WTC11 (cell line): ENCODE measurements at regions of chr20 and their contacts with region 1.

Region 1: GRCh38 chr20:50980851-50981713 is 22.5 kb downstream of the MOCS3 start:
- DNase-seq: peak; percentile 74
- ATAC-seq: peak; percentile 75
- H3K4me3 Mint-ChIP-seq: 0 out of 2 replicates have a peak overlapping the region, but pooled peaks have one; percentile 29
- H3K27ac Mint-ChIP-seq: no peak overlapping the region
- H3K4me1 Mint-ChIP-seq: peaks cover 3% of the 10 kb centered on the region
- H3K27me3 Mint-ChIP-seq: peaks cover 5% of the 10 kb centered on the region; the same call in 1 of the 2 replicates
- CTCF ChIP-seq: peak; percentile 82

Region 2: DNA sequence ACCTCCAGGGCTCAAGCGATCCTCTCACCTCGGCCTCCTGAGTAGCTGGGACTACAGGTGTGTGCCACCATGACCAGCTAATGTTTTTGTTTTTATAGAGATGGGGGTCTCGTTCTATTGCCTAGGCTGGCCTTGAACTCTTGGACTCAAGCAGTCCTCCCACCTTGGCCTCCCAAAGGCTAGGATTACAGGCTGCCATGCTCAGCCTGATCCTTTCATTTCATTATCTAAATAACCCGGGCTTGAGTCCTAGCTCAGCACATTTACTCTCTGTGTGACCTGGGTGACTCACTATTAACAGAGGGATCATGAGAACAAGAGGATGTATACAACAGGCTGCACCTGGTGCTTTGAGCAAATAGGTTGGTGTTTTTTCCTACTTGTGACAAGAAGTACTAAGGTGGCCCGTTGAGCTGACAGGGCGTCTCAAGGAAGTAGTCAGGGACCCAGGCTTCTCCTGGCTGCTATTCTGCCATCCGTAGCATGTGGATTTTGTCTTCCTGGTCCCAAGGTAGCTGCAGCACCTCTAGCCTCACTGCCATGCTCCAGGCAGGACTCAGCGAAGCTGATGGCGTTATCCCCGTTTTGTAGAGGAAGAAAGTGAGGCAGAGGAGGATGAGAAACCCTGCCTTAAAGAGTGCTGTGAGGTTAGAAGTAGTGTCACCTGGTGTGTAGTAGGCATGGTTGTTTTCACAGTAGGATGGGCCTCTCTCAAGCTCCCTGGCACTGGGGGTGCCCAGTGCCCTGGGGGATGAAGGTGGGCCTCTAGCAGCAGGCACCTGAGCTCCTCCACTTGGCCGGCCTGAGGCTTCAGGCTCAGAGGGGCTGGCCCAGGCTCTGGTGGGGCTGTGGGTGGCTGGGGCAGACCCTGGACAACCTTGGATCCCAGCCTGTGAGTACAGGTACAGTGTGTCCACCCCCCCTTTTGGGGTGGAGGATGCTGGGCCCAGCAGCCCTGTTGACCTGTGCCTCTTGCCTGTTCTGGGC is 112.3 kb before region 1 on chr20:
- CTCF ChIA-PET with region 1: no interaction called
- POLR2A ChIA-PET with region 1: no interaction called
- DNase-seq: no peak
- ATAC-seq: no peak
- H3K4me3 Mint-ChIP-seq: no peak overlapping the region
- H3K27ac Mint-ChIP-seq: peak overlapping the region; percentile 96
- H3K4me1 Mint-ChIP-seq: peaks cover 47% of the 10 kb centered on the region
- H3K27me3 Mint-ChIP-seq: no peaks in the 10 kb centered on the region
- CTCF ChIP-seq: no peak

Region 3: GRCh38 chr20:50948132-50948785 is 32.8 kb before region 1 on chr20:
- CTCF ChIA-PET with region 1: no interaction called
- POLR2A ChIA-PET with region 1: no interaction called
- DNase-seq: no peak
- ATAC-seq: no peak
- H3K4me3 Mint-ChIP-seq: no peak overlapping the region
- H3K27ac Mint-ChIP-seq: no peak overlapping the region
- H3K4me1 Mint-ChIP-seq: no peaks in the 10 kb centered on the region
- H3K27me3 Mint-ChIP-seq: no peaks in the 10 kb centered on the region
- CTCF ChIP-seq: no peak

Region 4: DNA sequence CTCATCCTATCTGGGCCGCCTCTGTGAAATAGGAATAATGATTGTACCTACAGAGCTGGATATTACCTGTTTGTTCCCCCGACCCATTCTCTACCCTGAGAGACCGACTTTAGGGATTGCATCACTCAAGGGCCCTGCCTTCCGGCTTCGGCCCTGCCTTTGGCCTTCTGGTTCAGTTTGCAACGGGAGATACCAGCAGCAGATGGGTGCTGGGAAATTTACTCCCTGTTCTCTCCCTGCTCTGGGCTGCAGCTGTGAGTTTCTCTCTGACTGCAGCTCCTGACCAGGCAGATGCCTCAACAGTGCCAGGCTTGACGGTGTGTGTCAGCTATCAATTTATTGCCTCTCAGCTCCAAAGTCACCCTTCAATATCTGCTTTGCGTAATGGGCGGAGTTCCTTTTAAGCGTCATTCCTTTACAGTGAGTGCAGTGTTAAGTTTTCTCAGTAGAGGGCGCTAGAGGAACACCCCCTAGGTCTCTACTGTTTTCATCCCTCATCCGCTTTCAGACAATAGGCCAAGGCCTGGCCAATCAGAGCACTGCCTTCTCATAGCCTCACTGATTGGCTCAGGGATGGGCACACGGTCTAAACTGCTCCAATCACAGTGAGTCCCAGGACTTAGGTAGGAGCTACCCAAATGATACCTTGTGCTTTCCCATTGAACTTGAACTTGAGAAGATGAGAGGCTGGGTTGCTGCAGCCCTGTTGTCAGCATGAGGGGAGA is 11.8 kb after region 1 on chr20:
- CTCF ChIA-PET with region 1: interaction called, 67 read pairs
- POLR2A ChIA-PET with region 1: interaction called, 7 read pairs
- DNase-seq: peak; percentile 74
- ATAC-seq: peak; percentile 91
- H3K4me3 Mint-ChIP-seq: peak overlapping the region; percentile 52
- H3K27ac Mint-ChIP-seq: peak overlapping the region; percentile 98
- H3K4me1 Mint-ChIP-seq: peaks cover 40% of the 10 kb centered on the region
- H3K27me3 Mint-ChIP-seq: peaks cover 5% of the 10 kb centered on the region
- CTCF ChIP-seq: peak; percentile 89

Region 5: DNA sequence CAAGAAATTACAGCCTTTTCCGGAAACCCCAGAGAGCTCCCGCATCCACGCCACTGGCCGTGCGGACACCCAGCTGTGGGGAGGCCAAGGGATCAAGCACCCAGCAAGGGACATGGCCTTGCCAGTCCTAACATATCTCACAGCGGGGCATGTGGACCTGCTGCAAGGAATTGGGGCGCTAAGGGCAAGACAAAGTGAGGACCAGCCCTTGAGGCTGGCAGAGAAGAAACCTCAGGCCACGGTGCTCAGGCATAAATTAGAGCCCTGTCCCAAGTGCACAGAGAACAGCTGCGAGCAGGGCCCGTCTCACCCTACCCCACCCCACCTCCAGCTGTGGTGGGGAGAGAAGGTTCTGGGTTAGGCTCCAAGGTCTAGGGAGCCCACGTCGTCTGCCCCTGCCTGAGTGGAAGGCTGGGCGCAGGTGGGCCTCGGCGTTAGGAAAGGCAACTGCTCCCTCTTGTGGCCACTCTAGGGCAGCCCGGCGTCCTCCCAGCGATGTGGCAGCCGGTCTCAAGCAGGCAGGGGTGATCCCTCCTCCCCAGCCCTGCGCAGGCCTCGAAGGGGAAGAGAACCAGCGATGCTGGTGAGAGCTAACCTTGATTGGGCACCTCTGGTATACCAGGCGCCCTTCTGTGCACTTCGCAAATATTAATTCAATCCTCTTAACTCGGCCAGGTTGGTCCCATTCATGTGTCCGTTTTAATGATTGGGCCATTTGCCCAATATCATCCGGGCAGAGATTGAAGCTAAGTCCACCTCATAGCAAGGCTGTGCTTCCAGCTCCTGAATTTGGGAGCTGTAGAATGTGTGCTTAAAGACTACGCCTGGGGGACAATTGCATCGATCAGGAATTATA is 325.6 kb after region 1 on chr20:
- CTCF ChIA-PET with region 1: interaction called, 21 read pairs
- POLR2A ChIA-PET with region 1: no interaction called
- DNase-seq: peak; percentile 87
- ATAC-seq: peak; percentile 72
- H3K4me3 Mint-ChIP-seq: no peak overlapping the region
- H3K27ac Mint-ChIP-seq: 0 out of 2 replicates have a peak overlapping the region, but pooled peaks have one; percentile 80
- H3K4me1 Mint-ChIP-seq: peaks cover 61% of the 10 kb centered on the region
- H3K27me3 Mint-ChIP-seq: peaks cover 43% of the 10 kb centered on the region
- CTCF ChIP-seq: peak; percentile 88

Region 6: DNA sequence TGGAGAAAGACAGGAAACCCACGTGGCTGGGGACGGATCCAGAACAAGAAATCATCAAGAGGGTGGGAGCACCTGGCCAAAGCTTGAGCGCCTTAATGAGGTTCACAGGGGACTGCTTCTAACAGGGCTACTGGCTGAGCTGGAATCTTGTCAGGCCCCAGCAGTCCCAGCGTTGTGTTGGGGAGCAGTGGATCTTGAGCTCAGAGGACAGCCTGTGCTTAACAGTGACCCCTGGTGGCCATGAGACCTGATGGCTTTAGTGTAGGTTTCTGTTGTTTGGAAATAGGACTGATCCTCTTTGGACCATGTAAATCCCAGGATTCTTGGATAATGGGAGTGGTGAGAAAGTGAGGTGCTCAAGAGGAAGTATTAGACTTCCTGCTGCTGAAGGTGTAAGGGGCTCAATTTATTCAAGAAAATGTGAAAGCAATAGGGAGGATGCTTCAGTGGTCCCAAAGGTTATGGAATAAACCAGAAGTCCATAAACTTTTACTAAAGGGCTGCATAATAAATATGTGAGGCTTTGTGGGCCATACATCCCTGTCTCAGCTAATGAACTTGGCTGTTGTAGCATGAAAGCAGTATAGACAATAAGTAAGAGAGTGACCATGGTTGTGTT is 345.2 kb after region 1 on chr20:
- CTCF ChIA-PET with region 1: interaction called, 27 read pairs
- POLR2A ChIA-PET with region 1: no interaction called
- DNase-seq: peak; percentile 76
- ATAC-seq: peak; percentile 91
- H3K4me3 Mint-ChIP-seq: no peak overlapping the region
- H3K27ac Mint-ChIP-seq: no peak overlapping the region
- H3K4me1 Mint-ChIP-seq: peaks cover 16% of the 10 kb centered on the region
- H3K27me3 Mint-ChIP-seq: peaks cover 3% of the 10 kb centered on the region; the same call in 1 of the 2 replicates
- CTCF ChIP-seq: peak; percentile 37; the same call in 1 of the 2 replicates